Right cardiac atrium (tissue), 5 donors: ENCODE measurements at regions of chrX and their contacts with region 1.

Region 1: DNA sequence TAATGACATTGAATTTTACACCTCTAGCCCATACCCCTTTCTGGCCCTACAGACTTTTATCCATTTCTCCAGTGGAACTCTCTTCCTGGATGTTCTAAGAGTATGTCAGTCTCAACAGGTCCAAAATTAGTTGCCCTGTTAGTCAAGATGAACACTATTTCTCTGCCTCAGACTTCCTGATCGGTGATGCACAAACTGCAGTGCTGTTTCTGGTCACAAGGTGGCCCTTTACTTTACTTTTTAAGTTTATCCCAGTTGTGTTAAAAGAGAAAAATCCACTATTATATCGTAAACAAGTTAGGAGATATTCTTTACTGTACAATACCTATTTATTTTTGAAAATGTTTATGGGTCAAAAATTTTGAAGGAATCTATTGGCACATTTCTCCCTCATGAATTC is 13.1 kb downstream of the TCEAL7 start:
- DNase-seq: peak in 1 of 3 donors; percentile 54
- ATAC-seq: no peak
- H3K4me3 ChIP-seq: no peak overlapping the region
- H3K27ac ChIP-seq: no peak overlapping the region
- H3K4me1 ChIP-seq: no peaks in the 10 kb centered on the region
- H3K27me3 ChIP-seq: no peaks in the 10 kb centered on the region

Region 2: DNA sequence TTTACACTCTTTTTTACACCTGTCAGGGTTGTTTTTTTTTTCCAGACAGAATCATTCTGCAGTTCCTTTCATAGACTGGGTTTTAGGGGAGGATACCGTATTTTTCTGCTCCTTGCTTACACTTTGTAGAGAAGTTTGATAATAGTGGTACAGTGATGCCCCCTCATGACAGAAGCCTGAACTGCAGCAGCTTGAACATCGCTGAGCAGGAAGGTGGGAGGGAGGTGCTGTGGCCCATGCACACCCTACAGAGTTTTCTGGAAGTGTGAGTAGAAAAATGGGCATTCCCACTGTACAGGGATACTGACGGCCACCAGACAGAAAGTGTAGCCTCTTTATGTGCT is 121.6 kb after region 1 on chrX:
- intact Hi-C with region 1: loop called (anchors 2 to 5 kb)
- DNase-seq: peak; percentile 55 to 83 (median 66)
- ATAC-seq: peak; percentile 90 to 93
- H3K4me3 ChIP-seq: peak overlapping the region; percentile 34
- H3K27ac ChIP-seq: no peak overlapping the region
- H3K4me1 ChIP-seq: no peaks in the 10 kb centered on the region
- H3K27me3 ChIP-seq: no peaks in the 10 kb centered on the region

Region 3: GRCh38 chrX:103503163-103503852 is 160.2 kb after region 1 on chrX:
- intact Hi-C with region 1: no loop called
- DNase-seq: no peak
- ATAC-seq: no peak
- H3K4me3 ChIP-seq: no peak overlapping the region
- H3K27ac ChIP-seq: no peak overlapping the region
- H3K4me1 ChIP-seq: no peaks in the 10 kb centered on the region
- H3K27me3 ChIP-seq: no peaks in the 10 kb centered on the region

Region 4: DNA sequence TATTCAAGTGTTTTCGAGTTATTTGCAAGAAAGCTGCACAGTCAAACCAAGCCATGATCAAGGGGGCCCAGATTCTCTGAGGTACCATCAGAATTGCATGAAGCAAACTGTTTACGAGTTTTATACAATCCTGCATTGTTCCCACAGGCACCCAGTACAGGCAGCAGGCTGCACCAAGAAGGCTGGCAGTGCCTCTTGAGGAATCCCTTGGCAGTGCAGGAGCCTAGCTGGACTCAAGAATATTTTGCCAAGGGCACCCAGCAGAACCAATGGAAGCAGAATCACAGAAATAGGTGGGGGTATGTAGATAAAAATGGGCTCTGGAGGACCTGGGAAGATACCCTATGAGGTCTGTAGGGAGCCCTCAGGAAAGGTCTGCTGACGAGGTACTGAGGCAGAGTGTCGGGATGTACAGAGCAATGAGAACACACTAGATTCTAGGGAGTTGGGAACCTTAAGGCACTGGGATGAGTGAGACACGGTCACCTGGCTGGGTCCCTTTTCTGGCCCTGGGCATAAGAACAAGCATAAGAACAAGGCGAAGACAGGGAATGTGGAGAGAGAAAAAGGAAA is 431.1 kb after region 1 on chrX:
- intact Hi-C with region 1: no loop called
- DNase-seq: no peak
- ATAC-seq: peak in 1 of 2 donors; percentile 62
- H3K4me3 ChIP-seq: no peak overlapping the region
- H3K27ac ChIP-seq: no peak overlapping the region
- H3K4me1 ChIP-seq: no peaks in the 10 kb centered on the region
- H3K27me3 ChIP-seq: no peaks in the 10 kb centered on the region